ENCODE measurements at regions of chr17 and their contacts with region 1.

Region 1: GRCh38 chr17:34420254-34420766 is 57.3 kb upstream of the CCL1 start:
- DNase-seq: peak in 4 of 5 donors; percentile 61 to 78 (median 74)
- H3K4me3 ChIP-seq: no peak overlapping the region
- H3K27ac ChIP-seq: no peak overlapping the region
- H3K4me1 ChIP-seq: no peaks in the 10 kb centered on the region
- H3K27me3 ChIP-seq: peaks cover 7% of the 10 kb centered on the region
- CTCF ChIP-seq: peak; percentile 93

Region 2: GRCh38 chr17:34637548-34638525 is 217.5 kb after region 1 on chr17:
- intact Hi-C with region 1: loop called (anchors 10 kb)
- DNase-seq: peak; percentile 81 to 94 (median 86)
- H3K4me3 ChIP-seq: no peak overlapping the region
- H3K27ac ChIP-seq: no peak overlapping the region
- H3K4me1 ChIP-seq: peaks cover 0 to 3% (median 0%) of the 10 kb centered on the region in 3 donors
- H3K27me3 ChIP-seq: peaks cover 7% of the 10 kb centered on the region
- CTCF ChIP-seq: peak; percentile 83

Region 3: DNA sequence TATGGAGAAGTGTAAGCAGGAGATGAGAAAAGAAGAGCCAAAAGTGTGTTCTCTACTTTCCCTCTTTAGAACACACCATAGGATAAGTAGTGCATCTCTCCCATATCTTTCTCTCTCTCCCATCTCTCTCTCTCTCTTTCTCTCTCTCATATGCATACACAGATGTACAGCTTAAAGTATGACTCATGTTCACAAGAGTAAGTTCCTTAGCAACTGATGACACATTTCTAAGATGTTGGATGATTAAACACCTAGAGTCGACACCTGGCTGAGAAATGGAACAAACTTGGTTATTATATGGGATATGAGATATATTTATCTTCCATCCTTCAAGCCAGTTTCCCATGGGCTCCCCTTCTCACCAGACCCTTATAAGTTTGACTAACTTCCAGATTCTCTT is 272.6 kb after region 1 on chr17:
- intact Hi-C with region 1: no loop called
- DNase-seq: no peak
- H3K4me3 ChIP-seq: no peak overlapping the region
- H3K27ac ChIP-seq: no peak overlapping the region
- H3K4me1 ChIP-seq: no peaks in the 10 kb centered on the region
- H3K27me3 ChIP-seq: peaks cover 2% of the 10 kb centered on the region
- CTCF ChIP-seq: no peak

Region 4: GRCh38 chr17:35119368-35120165 is 699.3 kb after region 1 on chr17 and contains the start of gene RAD51D:
- intact Hi-C with region 1: loop called (anchors 10 kb)
- DNase-seq: peak; percentile 82 to 91 (median 90)
- H3K4me3 ChIP-seq: peak within 1 kb of the TSS; percentile 70 to 83 (median 80)
- H3K27ac ChIP-seq: peak within 1 kb of the TSS; percentile 53 to 78
- H3K4me1 ChIP-seq: peaks cover 0 to 13% (median 0%) of the 10 kb centered on the region in 3 donors
- H3K27me3 ChIP-seq: no peaks in the 10 kb centered on the region
- CTCF ChIP-seq: peak; percentile 97
- total RNA-seq, gene RAD51D: 13.8 TPM

Measured in kidney (tissue), 22 donors.